Body of pancreas (tissue), 4 donors: ENCODE measurements at regions of chr3 and their contacts with region 1.

Region 1: DNA sequence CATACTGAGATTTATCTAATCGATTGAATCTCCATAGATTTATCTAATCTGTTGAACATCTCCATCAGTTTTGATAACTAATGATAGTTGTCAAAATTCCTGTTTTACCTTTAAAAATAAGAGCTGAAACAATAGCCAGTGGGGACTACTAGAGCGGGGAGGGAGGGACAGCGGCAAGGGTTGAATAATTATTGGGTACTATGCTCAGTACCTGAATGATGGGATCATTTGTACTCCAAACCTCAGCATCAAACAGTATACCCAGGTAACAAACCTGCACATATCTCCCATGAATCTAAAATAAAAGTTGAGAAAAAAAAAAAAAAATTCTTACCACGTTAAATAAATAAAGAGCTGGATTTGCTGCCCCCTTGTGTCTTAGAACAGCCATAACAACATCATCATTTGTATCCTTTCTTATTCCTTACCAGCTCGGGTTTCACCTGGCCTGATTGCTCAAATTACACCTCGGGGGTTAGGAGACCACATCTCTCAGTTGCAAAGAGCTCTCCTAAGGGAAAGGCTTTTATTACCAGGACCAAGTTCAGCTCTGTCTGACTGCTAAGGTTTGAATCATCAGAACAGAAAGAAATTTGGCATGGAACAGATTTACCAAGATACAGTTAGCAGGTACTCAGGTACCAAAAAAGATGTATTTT is 25.7 kb upstream of the RPL39L start:
- DNase-seq: peak; percentile 28 to 69 (median 45)
- ATAC-seq: peak; percentile 56
- H3K4me3 ChIP-seq: no peak overlapping the region
- H3K27ac ChIP-seq: no peak overlapping the region
- H3K4me1 ChIP-seq: no peaks in the 10 kb centered on the region
- H3K27me3 ChIP-seq: no peaks in the 10 kb centered on the region
- CTCF ChIP-seq: peak; percentile 62 to 93 (median 73)
- POLR2A ChIP-seq: no peak

Region 2: DNA sequence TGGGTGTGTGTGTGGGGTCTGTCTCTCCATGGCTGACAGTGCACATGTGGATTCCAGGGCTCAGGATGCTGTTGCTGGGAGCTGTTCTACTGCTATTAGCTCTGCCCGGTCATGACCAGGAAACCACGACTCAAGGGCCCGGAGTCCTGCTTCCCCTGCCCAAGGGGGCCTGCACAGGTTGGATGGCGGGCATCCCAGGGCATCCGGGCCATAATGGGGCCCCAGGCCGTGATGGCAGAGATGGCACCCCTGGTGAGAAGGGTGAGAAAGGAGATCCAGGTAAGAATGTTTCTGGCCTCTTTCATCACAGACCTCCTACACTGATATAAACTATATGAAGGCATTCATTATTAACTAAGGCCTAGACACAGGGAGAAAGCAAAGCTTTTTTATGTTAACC is 312.0 kb before region 1 on chr3:
- intact Hi-C with region 1: loop called (anchors 10 kb)
- DNase-seq: no peak
- ATAC-seq: no peak
- H3K4me3 ChIP-seq: no peak overlapping the region
- H3K27ac ChIP-seq: no peak overlapping the region
- H3K4me1 ChIP-seq: no peaks in the 10 kb centered on the region
- H3K27me3 ChIP-seq: no peaks in the 10 kb centered on the region
- CTCF ChIP-seq: no peak
- POLR2A ChIP-seq: no peak

Region 3: GRCh38 chr3:187112934-187113793 is 51.9 kb before region 1 on chr3:
- intact Hi-C with region 1: loop called (anchors 10 kb)
- DNase-seq: no peak
- ATAC-seq: no peak
- H3K4me3 ChIP-seq: no peak overlapping the region
- H3K27ac ChIP-seq: no peak overlapping the region
- H3K4me1 ChIP-seq: no peaks in the 10 kb centered on the region
- H3K27me3 ChIP-seq: no peaks in the 10 kb centered on the region
- CTCF ChIP-seq: peak in 6 of 7 experiments; percentile 38 to 54 (median 47)
- POLR2A ChIP-seq: no peak

Region 4: DNA sequence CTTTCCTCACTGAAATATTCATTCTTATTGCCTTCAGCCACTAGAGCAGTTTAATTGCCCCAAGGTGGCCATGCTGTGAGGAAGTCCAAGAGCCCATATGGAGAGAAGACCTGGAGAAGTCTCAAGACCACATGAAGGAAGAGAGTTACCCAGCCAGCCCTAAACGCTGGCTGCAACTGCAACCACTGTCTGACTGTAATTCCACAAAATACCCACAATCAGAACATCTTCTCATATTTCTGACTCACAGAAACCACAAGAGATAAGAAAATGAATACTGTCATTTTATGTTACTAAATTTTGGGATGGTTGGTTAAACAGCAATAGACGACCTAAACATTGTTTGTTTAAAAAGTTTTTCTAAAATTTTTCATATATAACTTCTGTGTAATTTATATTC is 519.9 kb after region 1 on chr3:
- intact Hi-C with region 1: no loop called
- DNase-seq: no peak
- ATAC-seq: no peak
- H3K4me3 ChIP-seq: no peak overlapping the region
- H3K27ac ChIP-seq: no peak overlapping the region
- H3K4me1 ChIP-seq: no peaks in the 10 kb centered on the region
- H3K27me3 ChIP-seq: no peaks in the 10 kb centered on the region
- CTCF ChIP-seq: no peak
- POLR2A ChIP-seq: no peak